ENCODE measurements at regions of chr6 and their contacts with region 1.

Region 1: DNA sequence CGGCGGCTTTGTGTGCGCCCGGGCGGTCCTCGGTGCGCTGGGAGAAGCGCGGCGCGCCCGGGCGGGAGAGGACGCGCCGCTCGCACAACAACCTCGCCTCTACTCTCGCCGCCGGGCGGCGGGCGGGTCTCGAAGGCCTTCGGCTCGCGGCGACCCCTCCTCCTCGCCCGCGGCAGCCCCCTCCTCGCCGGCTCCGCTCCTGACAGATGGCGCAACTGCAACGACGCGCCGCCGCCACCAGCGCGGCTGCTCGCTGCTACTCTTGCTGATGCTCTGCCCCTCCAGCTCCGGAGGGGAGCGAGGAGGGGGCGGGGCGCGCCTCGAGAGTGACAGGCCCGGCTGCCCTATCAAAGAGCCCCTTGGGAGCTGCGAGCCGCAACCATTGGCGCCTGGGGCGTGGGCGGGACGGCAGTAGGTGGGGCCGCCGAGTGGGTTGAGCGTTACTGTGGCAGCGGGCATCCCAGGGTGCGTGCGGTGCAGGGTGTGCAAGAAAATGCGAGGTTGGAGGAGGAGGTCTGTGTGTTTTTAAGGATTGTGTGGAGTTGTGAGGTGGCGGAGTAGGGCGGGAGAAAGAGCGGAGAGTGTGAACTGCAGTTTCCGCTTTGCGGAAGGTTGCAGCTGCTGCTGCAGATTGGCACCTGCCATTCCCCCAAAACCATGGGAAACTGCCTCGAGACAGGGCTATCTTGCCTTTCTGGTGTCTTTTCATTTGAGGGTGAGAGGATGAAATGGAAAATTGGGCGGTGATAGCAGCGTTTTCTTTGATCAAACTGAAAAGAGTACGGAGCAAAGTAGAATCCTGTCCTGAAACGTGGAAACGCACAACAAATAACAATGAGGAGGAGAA is at the start of gene FYN:
- DNase-seq: peak; percentile 97
- ATAC-seq: peak; percentile 94
- H3K4me3 Mint-ChIP-seq: peak within 1 kb of the TSS; percentile 93
- H3K27ac Mint-ChIP-seq: peak within 1 kb of the TSS; percentile 90
- H3K4me1 Mint-ChIP-seq: peaks cover 44% of the 10 kb centered on the region
- H3K27me3 Mint-ChIP-seq: no peaks in the 10 kb centered on the region
- CTCF ChIP-seq: no peak
- total RNA-seq, gene FYN: 57.8 and 64.7 TPM in 2 replicates

Region 2: GRCh38 chr6:111483736-111484632 is 389.4 kb before region 1 on chr6:
- CTCF ChIA-PET with region 1: no interaction called
- POLR2A ChIA-PET with region 1: interaction called, 7 read pairs
- intact Hi-C with region 1: loop called (anchors 5 kb)
- DNase-seq: peak; percentile 85
- ATAC-seq: peak; percentile 67
- H3K4me3 Mint-ChIP-seq: peak overlapping the region; percentile 97
- H3K27ac Mint-ChIP-seq: peak overlapping the region; percentile 99
- H3K4me1 Mint-ChIP-seq: peaks cover 37% of the 10 kb centered on the region
- H3K27me3 Mint-ChIP-seq: no peaks in the 10 kb centered on the region
- CTCF ChIP-seq: no peak

Region 3: DNA sequence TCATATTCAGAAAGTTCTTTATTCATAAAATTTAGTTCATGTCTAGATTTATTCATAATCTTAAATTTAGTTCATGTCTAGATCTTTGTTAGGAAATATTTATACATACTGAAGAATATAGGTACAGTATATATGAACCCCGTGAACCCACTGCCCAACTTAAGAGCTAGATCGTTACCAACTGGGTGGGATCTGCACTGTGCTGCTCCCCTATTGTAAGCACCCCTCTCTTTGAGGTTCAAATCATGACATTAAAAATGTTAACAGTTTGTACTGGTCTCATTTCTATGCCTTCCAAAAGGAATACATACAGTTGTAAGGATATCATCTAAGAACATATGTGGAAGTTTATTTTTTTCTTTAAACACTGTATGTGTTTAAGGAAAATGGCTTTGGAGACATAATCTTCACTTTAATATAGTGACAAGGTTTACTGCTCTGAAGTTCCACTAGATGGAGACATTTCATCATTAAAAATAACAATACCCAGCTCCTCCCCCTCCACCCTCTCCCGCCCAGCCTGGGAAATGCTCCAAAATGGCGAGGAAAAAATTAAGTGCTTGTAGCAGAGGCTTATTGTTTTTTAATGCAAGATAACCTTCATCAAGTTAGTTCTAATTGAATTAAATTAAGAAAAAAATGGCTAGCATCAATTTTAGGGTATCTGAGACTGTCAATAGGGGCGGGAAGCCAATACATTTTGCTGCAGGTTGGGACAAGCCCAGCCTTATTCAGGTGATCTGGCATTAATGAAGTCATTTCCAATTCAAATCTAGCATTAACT is 163.6 kb before region 1 on chr6:
- CTCF ChIA-PET with region 1: interaction called, 5 read pairs
- POLR2A ChIA-PET with region 1: no interaction called
- intact Hi-C with region 1: loop called (anchors 1 kb)
- DNase-seq: no peak
- ATAC-seq: peak; percentile 97
- H3K4me3 Mint-ChIP-seq: peak overlapping the region; percentile 19
- H3K27ac Mint-ChIP-seq: no peak overlapping the region
- H3K4me1 Mint-ChIP-seq: peaks cover 4% of the 10 kb centered on the region
- H3K27me3 Mint-ChIP-seq: no peaks in the 10 kb centered on the region
- CTCF ChIP-seq: peak; percentile 44

Region 4: GRCh38 chr6:111764238-111765175 is 108.9 kb before region 1 on chr6:
- CTCF ChIA-PET with region 1: no interaction called
- POLR2A ChIA-PET with region 1: interaction called, 9 read pairs
- intact Hi-C with region 1: loop called (anchors 1 kb)
- DNase-seq: no peak
- ATAC-seq: peak; percentile 82
- H3K4me3 Mint-ChIP-seq: peak overlapping the region; percentile 61
- H3K27ac Mint-ChIP-seq: peak overlapping the region; percentile 81
- H3K4me1 Mint-ChIP-seq: peaks cover 94% of the 10 kb centered on the region
- H3K27me3 Mint-ChIP-seq: no peaks in the 10 kb centered on the region
- CTCF ChIP-seq: no peak

Region 5: DNA sequence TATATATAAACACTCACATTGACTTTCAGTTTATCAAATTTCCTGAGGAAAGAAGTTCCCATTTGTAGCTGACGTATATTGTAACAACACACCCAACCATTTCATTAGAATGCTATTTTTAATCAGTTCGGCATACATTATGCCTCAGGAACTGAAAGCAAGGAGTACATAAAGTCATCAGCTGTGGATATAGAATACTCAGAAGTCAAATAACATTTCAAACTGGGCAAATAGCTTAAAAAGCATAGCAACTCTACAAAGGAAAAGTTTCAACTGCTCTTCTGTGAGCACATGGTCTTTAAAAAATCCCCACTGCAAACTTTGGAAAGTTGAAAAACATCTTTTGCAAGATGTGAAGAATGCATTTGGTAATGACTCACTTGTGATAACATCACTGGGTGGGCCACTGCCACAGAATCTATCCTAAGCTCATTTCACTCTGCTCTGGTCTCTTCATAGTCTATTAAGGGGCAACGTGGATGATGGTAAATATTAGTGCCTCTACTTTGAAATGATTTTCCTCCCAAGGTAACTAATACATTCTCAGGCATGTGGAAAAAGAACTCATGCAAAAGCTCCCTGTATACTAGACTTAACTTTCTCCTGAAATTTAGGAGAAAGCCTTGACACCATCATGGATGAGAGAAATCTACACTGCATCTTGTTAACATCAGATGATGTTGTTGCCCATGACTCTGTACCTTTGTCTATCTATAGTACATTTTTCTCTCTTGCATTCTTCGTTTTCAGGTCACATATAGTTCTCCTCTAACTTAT is 49.4 kb before region 1 on chr6:
- CTCF ChIA-PET with region 1: no interaction called
- POLR2A ChIA-PET with region 1: interaction called, 10 read pairs
- intact Hi-C with region 1: no loop called
- DNase-seq: no peak
- ATAC-seq: peak; percentile 57
- H3K4me3 Mint-ChIP-seq: no peak overlapping the region
- H3K27ac Mint-ChIP-seq: peak overlapping the region; percentile 77
- H3K4me1 Mint-ChIP-seq: peaks cover 28% of the 10 kb centered on the region
- H3K27me3 Mint-ChIP-seq: no peaks in the 10 kb centered on the region
- CTCF ChIP-seq: no peak

Region 6: GRCh38 chr6:111997078-111997852 is 123.9 kb after region 1 on chr6:
- CTCF ChIA-PET with region 1: no interaction called
- POLR2A ChIA-PET with region 1: no interaction called
- intact Hi-C with region 1: loop called (anchors 1 kb)
- DNase-seq: peak; percentile 49
- ATAC-seq: peak; percentile 90
- H3K4me3 Mint-ChIP-seq: peak overlapping the region; percentile 42
- H3K27ac Mint-ChIP-seq: no peak overlapping the region
- H3K4me1 Mint-ChIP-seq: peaks cover 6% of the 10 kb centered on the region
- H3K27me3 Mint-ChIP-seq: peaks cover 2% of the 10 kb centered on the region
- CTCF ChIP-seq: no peak

Measured in activated B cell treated with CpG ODN at 0.5 μM for 24 hours (primary cell).